H1 (cell line): ENCODE measurements at regions of chr3 and their contacts with region 1.

Region 1: DNA sequence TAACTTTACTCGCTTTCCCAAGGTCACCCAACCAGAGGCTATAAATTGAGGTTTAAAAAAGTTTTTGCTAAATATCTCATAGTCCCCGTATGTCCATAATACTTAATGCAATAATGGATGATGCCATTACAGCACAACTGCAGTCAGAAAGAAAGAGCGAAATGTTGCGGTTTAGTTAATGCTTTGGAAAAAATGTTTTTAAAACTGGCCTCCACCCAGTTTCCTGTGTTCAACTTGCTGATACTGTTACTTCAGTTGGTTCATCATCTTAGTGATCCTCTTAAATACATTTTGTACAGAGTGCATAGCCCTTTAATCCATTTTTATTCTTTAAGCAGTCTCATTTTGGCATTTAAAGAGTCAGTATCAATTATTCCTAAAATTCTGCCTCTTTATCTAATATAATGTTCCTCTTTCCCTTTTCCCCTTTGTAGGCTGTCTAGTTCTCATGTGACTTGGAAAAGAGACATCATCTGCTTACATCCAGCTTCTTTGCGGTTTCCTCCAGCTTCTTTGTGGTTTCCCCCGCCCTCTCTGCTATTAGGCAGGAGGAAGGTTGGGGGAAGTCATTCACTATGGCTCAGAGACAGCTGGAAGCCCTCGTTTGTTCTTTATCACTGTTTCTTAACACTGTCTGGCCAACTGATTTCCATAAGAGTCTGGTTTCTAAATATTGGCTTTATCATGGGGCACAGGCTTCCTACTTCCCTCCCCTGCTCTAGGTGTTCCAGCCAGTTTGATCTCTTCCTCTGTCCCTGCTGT is 154.3 kb downstream of the GOLIM4 start:
- DNase-seq: no peak
- H3K4me3 ChIP-seq: no peak overlapping the region
- H3K27ac ChIP-seq: no peak overlapping the region
- H3K4me1 ChIP-seq: peaks cover 0 to 3% (median 0%) of the 10 kb centered on the region in 4 experiments; a peak in 2 of 7 replicates
- H3K27me3 ChIP-seq: no peaks in the 10 kb centered on the region
- CTCF ChIP-seq: no peak
- EP300 ChIP-seq: no peak
- POLR2A ChIP-seq: no peak
- RAD21 ChIP-seq: no peak

Region 2: DNA sequence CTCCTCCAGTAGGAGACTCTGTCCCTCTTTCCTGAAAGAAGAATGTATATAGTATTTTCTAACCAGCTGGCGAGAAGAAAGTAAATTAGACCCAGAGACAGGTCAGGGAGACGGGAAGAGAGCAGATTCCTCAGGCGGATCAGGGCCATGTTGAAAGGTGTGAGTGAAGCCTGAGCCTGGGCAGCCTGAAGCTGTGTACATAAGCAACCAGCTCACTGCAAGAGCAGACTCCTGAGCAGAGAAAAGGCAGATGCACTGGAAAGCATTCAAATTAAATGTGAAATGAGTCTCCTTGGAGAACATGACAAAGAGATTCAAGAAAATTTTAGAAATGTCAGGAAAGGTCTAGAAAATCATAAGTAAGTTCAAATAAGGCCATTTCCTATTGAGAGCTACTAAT is 11.4 kb before region 1 on chr3:
- CTCF ChIA-PET with region 1: interaction called, 16 read pairs
- POLR2A ChIA-PET with region 1: no interaction called
- DNase-seq: no peak
- H3K4me3 ChIP-seq: no peak overlapping the region
- H3K27ac ChIP-seq: no peak overlapping the region
- H3K4me1 ChIP-seq: no peaks in the 10 kb centered on the region
- H3K27me3 ChIP-seq: no peaks in the 10 kb centered on the region
- CTCF ChIP-seq: no peak
- EP300 ChIP-seq: no peak
- POLR2A ChIP-seq: no peak
- RAD21 ChIP-seq: no peak